Left cardiac atrium (tissue), 4 donors: ENCODE measurements at regions of chr3 and their contacts with region 1.

Region 1: GRCh38 chr3:70963431-70964275 is 619.9 kb downstream of the FOXP1 start:
- DNase-seq: no peak
- ATAC-seq: no peak

Region 2: GRCh38 chr3:70716832-70717231 is 246.8 kb before region 1 on chr3:
- intact Hi-C with region 1: loop called in 1 of 2 experiments (anchors 10 kb)
- DNase-seq: peak; percentile 31
- ATAC-seq: peak in 1 of 2 donors; percentile 44